Colonic mucosa (tissue), 4 donors: ENCODE measurements at regions of chr5 and their contacts with region 1.

Region 1: GRCh38 chr5:170183816-170184687 is 48.7 kb upstream of the C5orf58 start:
- DNase-seq: peak; percentile 53
- H3K4me3 ChIP-seq: no peak overlapping the region
- H3K27ac ChIP-seq: no peak overlapping the region
- H3K4me1 ChIP-seq: no peaks in the 10 kb centered on the region
- H3K27me3 ChIP-seq: no peaks in the 10 kb centered on the region
- CTCF ChIP-seq: peak; percentile 58

Region 2: GRCh38 chr5:170100066-170100943 is 83.7 kb before region 1 on chr5:
- intact Hi-C with region 1: loop called (anchors 10 kb)
- DNase-seq: peak; percentile 70
- H3K4me3 ChIP-seq: no peak overlapping the region
- H3K27ac ChIP-seq: no peak overlapping the region
- H3K4me1 ChIP-seq: no peaks in the 10 kb centered on the region
- H3K27me3 ChIP-seq: no peaks in the 10 kb centered on the region
- CTCF ChIP-seq: peak; percentile 40